Left lung (tissue), 14 donors: ENCODE measurements at regions of chr1 and their contacts with region 1.

Region 1: DNA sequence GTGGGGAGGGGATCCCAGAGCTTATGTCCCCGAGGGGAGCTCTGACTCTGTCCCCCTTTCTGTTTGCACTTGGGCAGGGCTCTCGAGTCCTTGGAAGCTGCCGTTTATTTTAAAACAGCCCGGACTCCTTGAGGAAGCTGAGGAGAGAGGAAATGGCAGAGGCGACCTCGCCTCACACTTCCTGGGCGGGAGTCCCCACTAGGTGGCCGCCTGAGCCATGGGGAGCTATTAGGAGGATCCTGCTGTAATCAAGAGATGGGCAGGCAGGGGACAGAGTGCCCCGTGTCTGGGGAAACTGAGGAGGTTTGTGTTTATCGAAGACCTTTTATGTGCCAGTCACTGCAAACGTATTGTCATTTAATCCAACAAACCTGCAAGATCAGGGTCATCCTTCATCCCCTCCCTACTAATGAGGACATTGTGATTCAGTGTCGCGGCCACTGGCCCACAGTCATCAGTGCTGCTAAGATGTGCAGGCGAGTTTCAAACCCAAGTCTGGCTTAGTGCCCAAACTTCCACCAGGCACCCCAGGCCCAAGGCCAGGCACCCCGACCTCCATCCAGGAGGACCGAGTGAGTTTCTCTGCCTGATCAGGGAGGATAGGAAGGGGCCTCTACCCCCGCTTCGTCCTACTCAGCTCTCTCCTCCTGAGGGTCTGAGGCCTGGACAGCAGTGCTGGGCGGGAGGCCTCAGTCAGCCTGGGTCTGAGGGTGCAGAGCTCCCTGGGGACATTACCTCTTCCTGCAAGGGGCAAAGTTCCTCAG is 316.9 kb upstream of the VAMP3 start:
- DNase-seq: peak in 2 of 4 donors; percentile 56 to 79
- ATAC-seq: peak; percentile 86
- H3K4me3 ChIP-seq: no peak overlapping the region
- H3K27ac ChIP-seq: no peak overlapping the region
- H3K4me1 ChIP-seq: no peaks in the 10 kb centered on the region
- H3K27me3 ChIP-seq: no peaks in the 10 kb centered on the region
- CTCF ChIP-seq: peak; percentile 41 to 43

Region 2: DNA sequence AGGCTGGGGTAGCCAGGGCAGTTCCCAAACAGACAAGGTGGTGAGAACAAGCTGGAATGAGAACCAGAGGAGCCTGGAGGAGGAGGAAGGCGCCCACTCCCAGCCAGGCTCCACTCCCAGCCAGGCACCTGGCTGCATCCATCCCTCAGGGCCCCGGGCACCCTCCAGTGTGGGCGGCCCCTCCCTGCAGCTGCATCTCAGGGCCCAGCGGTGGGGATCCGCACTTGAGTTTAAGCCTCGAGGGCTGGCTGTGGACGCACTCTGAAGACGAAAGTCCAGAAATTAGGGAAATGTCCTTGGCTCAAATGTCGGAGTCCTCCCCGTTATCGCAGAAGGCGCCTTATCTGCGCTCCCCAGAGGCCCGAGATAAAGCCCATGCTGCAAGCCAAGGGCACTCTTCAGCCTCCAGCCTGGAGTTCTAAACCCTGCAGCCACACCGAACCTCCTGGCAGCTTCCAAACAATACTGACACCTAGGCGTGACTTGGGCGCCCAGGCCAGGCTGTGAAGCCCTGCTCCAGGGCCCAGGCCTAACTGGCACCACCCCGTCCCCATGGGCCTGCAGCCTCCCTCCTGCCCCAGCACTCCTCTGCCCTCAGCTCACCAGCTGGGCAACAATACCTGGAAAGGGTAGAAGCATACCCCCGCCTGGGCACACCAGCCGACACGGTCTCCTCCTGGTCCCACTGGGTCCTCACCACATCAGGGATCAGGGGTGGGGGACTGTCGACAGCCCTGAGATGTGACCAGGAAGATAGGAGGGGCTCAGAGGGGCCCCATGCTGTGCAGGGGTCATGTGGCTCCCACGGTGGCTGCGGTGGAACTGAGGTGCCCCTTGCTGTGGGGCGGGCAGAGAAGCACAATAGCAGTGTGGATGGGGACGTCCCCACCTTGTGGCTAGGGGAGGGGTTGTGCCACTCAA is 132.0 kb after region 1 on chr1:
- intact Hi-C with region 1: no loop called
- DNase-seq: peak in 2 of 4 donors; percentile 16 to 71
- ATAC-seq: no peak
- H3K4me3 ChIP-seq: no peak overlapping the region
- H3K27ac ChIP-seq: no peak overlapping the region
- H3K4me1 ChIP-seq: no peaks in the 10 kb centered on the region
- H3K27me3 ChIP-seq: no peaks in the 10 kb centered on the region
- CTCF ChIP-seq: no peak

Region 3: GRCh38 chr1:7630378-7630777 is 176.1 kb after region 1 on chr1:
- intact Hi-C with region 1: no loop called
- DNase-seq: peak in 1 of 4 donors; percentile 43
- ATAC-seq: no peak
- H3K4me3 ChIP-seq: no peak overlapping the region
- H3K27ac ChIP-seq: no peak overlapping the region
- H3K4me1 ChIP-seq: no peaks in the 10 kb centered on the region
- H3K27me3 ChIP-seq: peaks cover 0 to 49% of the 10 kb centered on the region in 2 donors
- CTCF ChIP-seq: no peak

Region 4: GRCh38 chr1:7646981-7647901 is 193.0 kb after region 1 on chr1:
- intact Hi-C with region 1: loop called in 1 of 2 experiments (anchors 10 kb)
- DNase-seq: peak in 3 of 4 donors; percentile 64 to 94 (median 70)
- ATAC-seq: peak; percentile 53
- H3K4me3 ChIP-seq: no peak overlapping the region
- H3K27ac ChIP-seq: no peak overlapping the region
- H3K4me1 ChIP-seq: peaks cover 0 to 23% of the 10 kb centered on the region in 2 donors
- H3K27me3 ChIP-seq: peaks cover 0 to 15% of the 10 kb centered on the region in 2 donors
- CTCF ChIP-seq: peak; percentile 93 to 94